B cell (primary cell): ENCODE measurements at regions of chr1 and their contacts with region 1.

Region 1: DNA sequence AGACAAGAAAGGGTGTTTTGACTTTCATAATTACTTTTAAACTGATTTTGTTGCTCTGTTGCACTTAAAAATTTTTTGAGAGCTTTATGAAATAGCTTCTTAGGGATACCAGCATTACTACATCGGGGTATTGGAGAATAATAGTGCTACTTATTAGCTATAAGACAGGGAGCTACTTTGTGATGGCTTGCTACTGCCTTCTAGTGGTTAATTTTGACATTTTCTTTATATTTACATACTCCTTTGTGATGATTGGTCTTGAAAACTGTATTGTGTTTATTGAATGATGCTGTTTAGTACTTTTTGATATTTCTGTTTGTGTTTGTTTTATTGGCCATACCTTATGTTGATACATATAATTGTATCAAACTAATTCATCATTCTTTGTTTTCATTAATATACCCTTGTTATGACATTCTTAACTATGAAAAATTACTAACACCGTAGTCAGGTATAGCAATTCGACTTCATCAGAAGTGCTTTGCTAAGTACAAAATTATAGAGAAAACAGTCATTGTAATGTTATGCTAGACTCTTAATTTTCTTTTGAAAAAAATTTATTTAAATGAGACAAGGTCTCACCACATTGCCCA is 85.5 kb downstream of the CLIC4 start:
- DNase-seq: peak; percentile 78
- ATAC-seq: peak; percentile 82
- H3K4me3 ChIP-seq: no peak overlapping the region
- H3K4me3 Mint-ChIP-seq: no peak overlapping the region
- H3K27ac ChIP-seq: no peak overlapping the region
- H3K27ac Mint-ChIP-seq: no peak overlapping the region
- H3K4me1 ChIP-seq: peaks cover 13 to 24% of the 10 kb centered on the region in 2 donors
- H3K4me1 Mint-ChIP-seq: peaks cover 51% of the 10 kb centered on the region
- H3K27me3 ChIP-seq: no peaks in the 10 kb centered on the region
- H3K27me3 Mint-ChIP-seq: no peaks in the 10 kb centered on the region
- CTCF ChIP-seq: peak; percentile 98

Region 2: GRCh38 chr1:24699628-24700027 is 131.1 kb before region 1 on chr1:
- CTCF ChIA-PET with region 1: interaction called, 44 read pairs
- POLR2A ChIA-PET with region 1: no interaction called
- intact Hi-C with region 1: no loop called
- DNase-seq: no peak
- ATAC-seq: no peak
- H3K4me3 ChIP-seq: no peak overlapping the region
- H3K4me3 Mint-ChIP-seq: no peak overlapping the region
- H3K27ac ChIP-seq: no peak overlapping the region
- H3K27ac Mint-ChIP-seq: no peak overlapping the region
- H3K4me1 ChIP-seq: peaks cover 19 to 20% of the 10 kb centered on the region in 2 donors
- H3K4me1 Mint-ChIP-seq: peaks cover 24% of the 10 kb centered on the region
- H3K27me3 ChIP-seq: no peaks in the 10 kb centered on the region
- H3K27me3 Mint-ChIP-seq: no peaks in the 10 kb centered on the region
- CTCF ChIP-seq: no peak

Region 3: GRCh38 chr1:24744911-24745710 is 85.7 kb before region 1 on chr1 and contains the start of gene CLIC4:
- CTCF ChIA-PET with region 1: interaction called, 36 read pairs
- POLR2A ChIA-PET with region 1: interaction called, 7 read pairs
- intact Hi-C with region 1: loop called (anchors 2 kb)
- DNase-seq: peak; percentile 100
- ATAC-seq: peak; percentile 78
- H3K4me3 ChIP-seq: peak within 1 kb of the TSS; percentile 79 to 99 (median 91)
- H3K4me3 Mint-ChIP-seq: peak within 1 kb of the TSS; percentile 94
- H3K27ac ChIP-seq: peak within 1 kb of the TSS; percentile 72 to 88
- H3K27ac Mint-ChIP-seq: peak within 1 kb of the TSS; percentile 99
- H3K4me1 ChIP-seq: peaks cover 63 to 82% of the 10 kb centered on the region in 2 donors
- H3K4me1 Mint-ChIP-seq: peaks cover 67% of the 10 kb centered on the region
- H3K27me3 ChIP-seq: no peaks in the 10 kb centered on the region
- H3K27me3 Mint-ChIP-seq: no peaks in the 10 kb centered on the region
- CTCF ChIP-seq: no peak
- total RNA-seq, gene CLIC4: 123 and 127 TPM in 2 replicates

Region 4: GRCh38 chr1:24779689-24780464 is 50.9 kb before region 1 on chr1:
- CTCF ChIA-PET with region 1: interaction called, 4 read pairs
- POLR2A ChIA-PET with region 1: no interaction called
- intact Hi-C with region 1: loop called (anchors 5 kb)
- DNase-seq: no peak
- ATAC-seq: no peak
- H3K4me3 ChIP-seq: no peak overlapping the region
- H3K4me3 Mint-ChIP-seq: no peak overlapping the region
- H3K27ac ChIP-seq: no peak overlapping the region
- H3K27ac Mint-ChIP-seq: no peak overlapping the region
- H3K4me1 ChIP-seq: peaks cover 17 to 18% of the 10 kb centered on the region in 2 donors
- H3K4me1 Mint-ChIP-seq: peaks cover 60% of the 10 kb centered on the region
- H3K27me3 ChIP-seq: no peaks in the 10 kb centered on the region
- H3K27me3 Mint-ChIP-seq: no peaks in the 10 kb centered on the region
- CTCF ChIP-seq: no peak

Region 5: DNA sequence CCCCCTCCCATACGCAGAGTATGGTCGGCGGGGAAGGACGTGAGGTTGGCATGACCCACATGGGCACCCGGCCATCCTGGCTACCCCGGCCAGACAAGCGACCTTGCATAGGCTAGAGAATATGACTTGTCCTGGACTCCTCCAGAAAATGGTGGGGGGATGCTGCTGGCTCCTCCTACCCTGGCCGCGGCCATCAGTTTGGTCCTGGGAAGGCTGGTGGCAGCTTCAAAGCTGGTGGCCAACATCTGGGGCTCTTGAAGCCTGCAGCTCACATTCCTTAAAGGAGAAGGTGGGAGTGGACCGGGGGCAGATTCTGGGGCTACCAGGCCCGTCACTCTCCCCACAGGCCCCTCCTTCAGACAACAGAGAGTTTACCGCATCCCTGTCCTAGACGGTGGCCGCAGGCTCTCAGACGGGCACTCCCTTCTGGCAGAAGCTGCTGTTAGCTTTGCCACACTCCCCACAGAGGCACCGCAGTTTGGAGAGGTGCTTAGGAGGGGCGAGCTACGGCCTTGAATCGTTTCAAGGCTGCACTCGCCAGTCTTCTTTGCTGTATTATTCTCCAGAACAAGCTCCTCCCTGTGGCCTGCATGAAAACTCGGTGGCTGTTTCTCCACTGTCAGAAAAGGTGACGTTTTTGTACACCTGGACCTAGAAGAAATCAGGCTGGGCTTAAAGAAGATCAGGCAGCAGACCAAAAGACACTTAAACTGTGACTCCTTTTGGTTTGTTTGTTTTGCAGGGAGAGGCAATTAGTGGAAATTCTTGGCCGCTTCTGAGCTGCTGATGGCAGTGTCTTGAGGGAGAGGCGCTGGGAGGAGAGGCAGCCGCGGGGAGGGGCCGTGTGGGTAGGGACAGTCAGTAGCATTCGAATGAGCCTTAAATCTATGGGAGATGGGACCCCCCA is 31.3 kb after region 1 on chr1:
- CTCF ChIA-PET with region 1: no interaction called
- POLR2A ChIA-PET with region 1: no interaction called
- intact Hi-C with region 1: no loop called
- DNase-seq: no peak
- ATAC-seq: no peak
- H3K4me3 ChIP-seq: no peak overlapping the region
- H3K4me3 Mint-ChIP-seq: no peak overlapping the region
- H3K27ac ChIP-seq: no peak overlapping the region
- H3K27ac Mint-ChIP-seq: no peak overlapping the region
- H3K4me1 ChIP-seq: peaks cover 0 to 5% of the 10 kb centered on the region in 2 donors
- H3K4me1 Mint-ChIP-seq: peaks cover 5% of the 10 kb centered on the region
- H3K27me3 ChIP-seq: peaks cover 0 to 4% (median 0%) of the 10 kb centered on the region in 4 experiments
- H3K27me3 Mint-ChIP-seq: peaks cover 6% of the 10 kb centered on the region
- CTCF ChIP-seq: no peak